ENCODE measurements at regions of chr10 and their contacts with region 1.

Region 1: DNA sequence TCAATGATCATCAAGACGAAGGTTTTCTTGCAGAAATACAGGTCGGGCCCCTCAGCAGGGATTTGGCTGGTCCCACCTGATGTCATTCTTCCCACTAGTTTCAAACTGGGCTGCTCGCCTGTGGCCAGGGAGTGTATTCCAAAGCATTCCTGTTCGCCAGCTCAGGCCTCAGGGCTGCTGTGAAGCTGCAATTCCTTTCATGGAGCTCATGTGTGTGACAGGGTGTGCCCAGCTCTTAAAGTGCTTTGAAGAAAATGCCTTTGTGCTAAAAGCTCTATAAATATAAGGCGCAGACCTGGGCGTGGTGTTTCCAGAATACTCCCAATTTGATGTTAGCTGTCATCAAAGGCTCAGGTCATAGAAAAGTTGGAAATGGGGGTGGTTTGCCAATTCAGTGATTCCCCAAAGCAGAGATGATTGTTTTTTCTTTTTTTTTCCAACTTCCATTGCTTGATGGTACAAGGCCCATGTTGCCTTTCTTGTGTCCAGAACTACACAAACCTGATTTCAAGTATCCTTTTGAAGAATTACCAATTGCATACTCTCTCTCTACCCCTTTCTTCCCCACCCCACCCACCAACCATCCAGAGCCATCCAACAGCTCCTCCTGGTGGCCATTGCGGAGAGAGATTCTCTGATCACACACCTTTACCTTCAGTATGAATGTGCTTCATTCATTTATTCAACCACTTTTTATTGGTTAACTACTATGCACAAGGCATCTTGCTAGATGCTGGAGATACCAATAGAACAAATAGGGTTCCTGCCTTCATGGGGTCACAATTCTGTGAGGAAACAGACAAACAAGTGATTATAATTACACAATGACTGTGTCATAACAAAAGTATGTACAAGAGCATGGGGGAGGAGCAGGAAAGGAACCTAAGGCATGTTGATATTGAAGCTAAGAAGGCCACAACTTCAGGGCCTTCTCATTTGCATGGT is 297.3 kb upstream of the LYZL1 start:
- DNase-seq: peak; percentile 85 to 90
- H3K4me3 ChIP-seq: no peak overlapping the region
- H3K4me3 Mint-ChIP-seq: no peak overlapping the region
- H3K27ac Mint-ChIP-seq: peak overlapping the region; percentile 91
- H3K4me1 ChIP-seq: peaks cover 28% of the 10 kb centered on the region
- H3K4me1 Mint-ChIP-seq: peaks cover 31% of the 10 kb centered on the region
- H3K27me3 ChIP-seq: no peaks in the 10 kb centered on the region
- H3K27me3 Mint-ChIP-seq: no peaks in the 10 kb centered on the region
- CTCF ChIP-seq: peak; percentile 95 to 96

Region 2: DNA sequence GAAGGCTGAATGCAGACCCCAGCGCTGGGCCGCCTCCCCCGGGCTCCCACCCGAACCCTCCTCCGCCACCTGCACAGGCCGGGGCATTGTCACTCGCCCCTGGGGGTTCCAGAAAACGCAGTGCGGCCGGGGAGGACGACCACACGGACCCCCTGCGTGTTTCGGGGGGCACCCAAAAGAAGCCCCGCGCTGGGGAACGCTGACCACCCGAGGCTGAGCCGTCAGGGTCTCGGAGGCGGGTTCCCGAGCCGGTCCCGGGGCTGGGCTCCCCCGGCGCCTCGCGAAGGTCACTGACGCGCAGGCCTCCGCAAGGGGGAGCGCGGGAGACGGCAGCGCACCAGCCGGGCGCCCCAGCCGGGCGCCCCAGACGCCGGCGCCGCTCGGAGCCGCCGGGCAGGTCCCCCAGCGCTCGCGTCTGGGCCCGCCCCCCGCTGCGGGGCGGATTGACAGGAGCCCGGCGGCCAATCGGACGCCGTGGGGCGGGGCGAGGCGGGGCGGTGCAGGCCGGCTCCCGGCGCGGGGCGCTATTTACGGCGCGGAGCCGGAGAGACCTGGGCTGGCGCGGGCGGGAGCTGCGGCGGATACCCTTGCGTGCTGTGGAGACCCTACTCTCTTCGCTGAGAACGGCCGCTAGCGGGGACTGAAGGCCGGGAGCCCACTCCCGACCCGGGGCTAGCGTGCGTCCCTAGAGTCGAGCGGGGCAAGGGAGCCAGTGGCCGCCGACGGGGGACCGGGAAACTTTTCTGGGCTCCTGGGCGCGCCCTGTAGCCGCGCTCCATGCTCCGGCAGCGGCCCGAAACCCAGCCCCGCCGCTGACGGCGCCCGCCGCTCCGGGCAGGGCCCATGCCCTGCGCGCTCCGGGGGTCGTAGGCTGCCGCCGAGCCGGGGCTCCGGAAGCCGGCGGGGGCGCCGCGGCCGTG is 314.4 kb before region 1 on chr10 and contains the start of gene BAMBI:
- CTCF ChIA-PET with region 1: interaction called, 4 read pairs
- POLR2A ChIA-PET with region 1: no interaction called
- intact Hi-C with region 1: loop called (anchors 1 kb)
- DNase-seq: peak; percentile 93 to 100
- H3K4me3 ChIP-seq: peak within 1 kb of the TSS; percentile 90
- H3K4me3 Mint-ChIP-seq: peak within 1 kb of the TSS; percentile 99
- H3K27ac Mint-ChIP-seq: peak within 1 kb of the TSS; percentile 85
- H3K4me1 ChIP-seq: peaks cover 47% of the 10 kb centered on the region
- H3K4me1 Mint-ChIP-seq: peaks cover 26% of the 10 kb centered on the region
- H3K27me3 ChIP-seq: no peaks in the 10 kb centered on the region
- H3K27me3 Mint-ChIP-seq: no peaks in the 10 kb centered on the region
- CTCF ChIP-seq: peak; percentile 72 to 90
- total RNA-seq, gene BAMBI: 146 and 165 TPM in 2 replicates

Region 3: GRCh38 chr10:28796606-28797512 is 194.7 kb before region 1 on chr10:
- CTCF ChIA-PET with region 1: interaction called, 5 read pairs
- POLR2A ChIA-PET with region 1: no interaction called
- intact Hi-C with region 1: loop called (anchors 1 kb)
- DNase-seq: no peak
- H3K4me3 ChIP-seq: no peak overlapping the region
- H3K4me3 Mint-ChIP-seq: no peak overlapping the region
- H3K27ac Mint-ChIP-seq: no peak overlapping the region
- H3K4me1 ChIP-seq: peaks cover 14% of the 10 kb centered on the region
- H3K4me1 Mint-ChIP-seq: peaks cover 7% of the 10 kb centered on the region
- H3K27me3 ChIP-seq: no peaks in the 10 kb centered on the region
- H3K27me3 Mint-ChIP-seq: no peaks in the 10 kb centered on the region
- CTCF ChIP-seq: no peak

Region 4: DNA sequence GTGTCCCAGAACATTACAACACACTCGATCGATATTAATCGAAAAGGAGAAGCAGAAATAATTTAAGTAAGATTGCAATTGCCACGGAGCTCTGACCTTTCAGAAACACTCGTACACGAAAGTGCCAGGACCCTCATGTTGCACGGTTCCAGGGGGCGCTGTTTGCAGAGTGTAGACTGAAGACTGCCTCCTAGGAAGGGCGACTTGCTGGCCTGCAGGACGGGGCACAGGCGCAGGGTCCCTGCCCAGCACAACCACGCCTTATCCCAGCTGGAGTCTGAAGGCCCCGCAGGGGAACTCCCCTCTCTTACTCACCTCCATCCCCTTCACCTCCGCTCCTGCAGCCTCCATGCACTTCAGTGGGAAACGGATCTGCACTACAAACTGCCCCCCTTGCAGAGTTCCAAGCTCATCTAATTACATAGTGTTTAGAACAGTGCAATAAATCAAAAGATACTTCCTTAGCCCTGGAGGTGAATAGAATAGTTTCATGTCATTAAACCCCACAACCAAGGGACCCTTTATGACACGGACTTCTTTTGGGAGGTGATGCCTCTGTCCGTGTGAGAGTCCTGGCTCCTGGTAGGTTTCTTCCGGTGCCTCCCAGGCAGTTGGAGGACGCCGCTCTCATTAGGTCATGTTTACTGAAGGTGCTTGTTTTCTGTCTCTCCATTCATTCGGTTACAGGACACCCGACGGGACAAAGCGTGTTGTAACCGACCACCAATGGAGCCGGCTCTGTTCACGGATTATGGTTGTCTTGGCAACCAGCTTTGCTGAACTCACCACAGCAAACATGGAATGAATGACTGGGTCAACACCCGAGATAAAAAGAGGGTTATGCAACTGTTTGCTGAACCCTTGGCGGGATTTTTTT is 52.1 kb before region 1 on chr10:
- CTCF ChIA-PET with region 1: interaction called, 16 read pairs
- POLR2A ChIA-PET with region 1: no interaction called
- intact Hi-C with region 1: loop called (anchors 1 kb)
- DNase-seq: peak; percentile 99 to 100
- H3K4me3 ChIP-seq: peak overlapping the region; percentile 35
- H3K4me3 Mint-ChIP-seq: peak overlapping the region; percentile 75
- H3K27ac Mint-ChIP-seq: peak overlapping the region; percentile 88
- H3K4me1 ChIP-seq: peaks cover 30% of the 10 kb centered on the region
- H3K4me1 Mint-ChIP-seq: peaks cover 45% of the 10 kb centered on the region
- H3K27me3 ChIP-seq: no peaks in the 10 kb centered on the region
- H3K27me3 Mint-ChIP-seq: no peaks in the 10 kb centered on the region
- CTCF ChIP-seq: peak; percentile 90 to 97

Region 5: GRCh38 chr10:29063806-29064644 is 72.4 kb after region 1 on chr10:
- CTCF ChIA-PET with region 1: no interaction called
- POLR2A ChIA-PET with region 1: no interaction called
- intact Hi-C with region 1: loop called (anchors 1 kb)
- DNase-seq: peak; percentile 87 to 89
- H3K4me3 ChIP-seq: 0 out of 2 replicates have a peak overlapping the region, but pooled peaks have one; percentile 14
- H3K4me3 Mint-ChIP-seq: peak overlapping the region; percentile 32
- H3K27ac Mint-ChIP-seq: peak overlapping the region; percentile 68
- H3K4me1 ChIP-seq: peaks cover 60% of the 10 kb centered on the region
- H3K4me1 Mint-ChIP-seq: peaks cover 41% of the 10 kb centered on the region
- H3K27me3 ChIP-seq: no peaks in the 10 kb centered on the region
- H3K27me3 Mint-ChIP-seq: no peaks in the 10 kb centered on the region
- CTCF ChIP-seq: peak; percentile 19 to 47

Region 6: GRCh38 chr10:29239569-29240472 is 248.2 kb after region 1 on chr10:
- CTCF ChIA-PET with region 1: no interaction called
- POLR2A ChIA-PET with region 1: no interaction called
- intact Hi-C with region 1: loop called (anchors 10 kb)
- DNase-seq: peak; percentile 74 to 78
- H3K4me3 ChIP-seq: no peak overlapping the region
- H3K4me3 Mint-ChIP-seq: no peak overlapping the region
- H3K27ac Mint-ChIP-seq: peak overlapping the region; percentile 55
- H3K4me1 ChIP-seq: peaks cover 45% of the 10 kb centered on the region
- H3K4me1 Mint-ChIP-seq: peaks cover 28% of the 10 kb centered on the region
- H3K27me3 ChIP-seq: no peaks in the 10 kb centered on the region
- H3K27me3 Mint-ChIP-seq: no peaks in the 10 kb centered on the region
- CTCF ChIP-seq: peak; percentile 79 to 87